HCT116 (cell line): ENCODE measurements at regions of chr1 and their contacts with region 1.

Region 1: GRCh38 chr1:90236493-90236892 is 241.6 kb downstream of the ZNF326 start:
- DNase-seq: no peak
- ATAC-seq: no peak
- H3K4me3 ChIP-seq: no peak overlapping the region
- H3K27ac ChIP-seq: no peak overlapping the region
- H3K4me1 ChIP-seq: no peaks in the 10 kb centered on the region
- H3K27me3 ChIP-seq: no peaks in the 10 kb centered on the region
- CTCF ChIP-seq: no peak
- POLR2A ChIP-seq: no peak
- RAD21 ChIP-seq: no peak

Region 2: GRCh38 chr1:89364954-89365567 is 871.4 kb before region 1 on chr1:
- CTCF ChIA-PET with region 1: no interaction called
- POLR2A ChIA-PET with region 1: no interaction called
- RAD21 ChIA-PET with region 1: no interaction called
- intact Hi-C with region 1: loop called (anchors 5 kb)
- DNase-seq: no peak
- ATAC-seq: no peak
- H3K4me3 ChIP-seq: no peak overlapping the region
- H3K27ac ChIP-seq: no peak overlapping the region
- H3K4me1 ChIP-seq: no peaks in the 10 kb centered on the region
- H3K27me3 ChIP-seq: no peaks in the 10 kb centered on the region
- CTCF ChIP-seq: no peak
- POLR2A ChIP-seq: no peak
- RAD21 ChIP-seq: no peak

Region 3: GRCh38 chr1:90155721-90156487 is 80.6 kb before region 1 on chr1:
- CTCF ChIA-PET with region 1: no interaction called
- POLR2A ChIA-PET with region 1: no interaction called
- RAD21 ChIA-PET with region 1: no interaction called
- intact Hi-C with region 1: no loop called
- DNase-seq: no peak
- ATAC-seq: no peak
- H3K4me3 ChIP-seq: no peak overlapping the region
- H3K27ac ChIP-seq: no peak overlapping the region
- H3K4me1 ChIP-seq: peaks cover 0 to 6% of the 10 kb centered on the region in 2 experiments; a peak in 2 of 4 replicates
- H3K27me3 ChIP-seq: peaks cover 5% of the 10 kb centered on the region
- CTCF ChIP-seq: no peak
- POLR2A ChIP-seq: no peak
- RAD21 ChIP-seq: no peak